ENCODE measurements at regions of chr10 and their contacts with region 1.

Region 1: DNA sequence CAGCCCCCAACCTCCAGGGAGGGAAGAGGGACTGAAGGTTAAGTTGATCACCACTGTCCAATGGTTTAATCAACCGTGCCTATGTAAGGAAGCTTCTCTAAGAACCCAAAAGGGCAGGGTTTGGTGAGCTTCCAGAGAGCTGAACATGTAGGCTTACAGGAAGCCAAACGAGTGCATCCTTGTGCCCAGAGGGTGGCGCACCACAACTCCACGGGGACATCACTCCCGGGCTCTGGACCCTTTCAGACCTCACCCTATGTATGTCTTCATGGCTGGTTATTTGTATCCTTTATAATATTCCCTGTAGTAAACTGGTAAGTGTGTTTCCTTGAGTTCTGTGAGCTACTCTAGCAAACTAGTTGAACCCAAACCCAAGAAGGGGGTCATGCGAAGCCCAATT is 11.5 kb upstream of the NFKB2 start:
- DNase-seq: no peak
- ATAC-seq: no peak
- H3K4me3 Mint-ChIP-seq: no peak overlapping the region
- H3K27ac Mint-ChIP-seq: no peak overlapping the region
- H3K4me1 Mint-ChIP-seq: peaks cover 0 to 4% (median under 1%) of the 10 kb centered on the region in 4 donors
- H3K27me3 Mint-ChIP-seq: no peaks in the 10 kb centered on the region

Region 2: DNA sequence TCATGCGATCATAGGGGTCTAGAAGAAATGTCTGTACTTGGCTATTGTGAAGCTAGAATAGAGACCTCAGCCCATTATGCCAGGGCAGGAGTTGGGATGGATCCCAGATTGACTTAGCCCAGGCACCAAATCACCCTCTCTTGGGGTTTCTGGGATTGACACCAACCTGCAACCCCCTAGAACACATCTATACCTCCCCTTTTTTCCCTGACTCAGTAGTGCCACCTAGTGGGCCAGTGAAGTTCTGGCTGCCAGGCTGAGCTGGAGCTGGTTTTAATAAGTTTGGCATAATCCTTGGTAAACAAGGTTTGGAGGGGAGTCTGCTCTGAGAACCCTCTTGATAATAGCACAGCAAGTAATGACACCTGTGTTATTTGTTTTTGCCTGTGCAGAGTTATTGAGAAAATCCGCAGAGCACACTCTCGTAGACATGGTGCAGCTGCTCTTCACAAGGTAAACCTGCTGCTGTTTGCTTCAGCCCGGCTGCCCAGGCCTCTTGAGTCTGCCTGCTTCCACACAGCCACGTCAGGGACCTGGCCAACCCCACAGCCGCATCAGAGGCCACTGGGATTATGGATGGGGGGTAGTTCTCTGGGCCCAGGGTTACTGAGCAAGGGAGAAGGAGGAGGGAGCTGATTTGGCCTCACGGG is 31.9 kb before region 1 on chr10:
- POLR2A ChIA-PET with region 1: interaction called, 14 read pairs
- DNase-seq: peak; percentile 51 to 83 (median 69)
- ATAC-seq: peak; percentile 77 to 88
- H3K4me3 Mint-ChIP-seq: no peak overlapping the region
- H3K27ac Mint-ChIP-seq: no peak overlapping the region
- H3K4me1 Mint-ChIP-seq: peaks cover 0 to 5% (median 0%) of the 10 kb centered on the region in 4 donors
- H3K27me3 Mint-ChIP-seq: no peaks in the 10 kb centered on the region

Measured in naive thymus-derived CD8-positive, alpha-beta T cell (primary cell).